ENCODE measurements at regions of chrX and their contacts with region 1.

Region 1: DNA sequence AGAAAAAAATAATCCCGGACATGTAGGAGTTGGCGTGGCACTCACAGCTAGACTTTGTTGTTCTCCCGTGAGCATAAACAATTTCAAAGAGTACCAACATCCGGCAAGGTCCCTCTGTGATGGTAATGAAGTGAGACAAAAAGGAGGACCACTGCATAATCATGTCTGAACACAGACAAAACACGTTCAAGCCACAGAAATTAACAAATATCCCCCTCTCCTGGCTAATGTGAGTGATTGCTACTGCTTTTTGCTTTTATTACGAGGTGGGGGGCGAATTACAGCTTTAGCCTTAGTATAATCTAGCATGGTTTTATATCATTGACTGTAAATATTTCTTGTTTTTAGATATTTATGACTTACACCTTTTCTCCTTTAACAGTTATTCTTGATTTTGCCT is 118.5 kb downstream of the PLS3 start:
- DNase-seq: peak; percentile 17 to 36
- ATAC-seq: peak; percentile 39 to 79; a peak in 3 of 6 replicates
- H3K4me3 ChIP-seq: peak overlapping the region; percentile 34; the same call in 1 of the 3 replicates
- H3K27ac ChIP-seq: no peak overlapping the region
- H3K4me1 ChIP-seq: no peaks in the 10 kb centered on the region
- CTCF ChIP-seq: peak; percentile 48
- EP300 ChIP-seq: no peak
- POLR2A ChIP-seq: no peak
- RAD21 ChIP-seq: peak; percentile 57 to 61

Region 2: GRCh38 chrX:115665122-115665521 is 14.3 kb before region 1 on chrX:
- CTCF ChIA-PET with region 1: interaction called, 11 read pairs
- POLR2A ChIA-PET with region 1: no interaction called
- DNase-seq: no peak
- ATAC-seq: no peak; a peak in 1 of 6 replicates
- H3K4me3 ChIP-seq: no peak overlapping the region
- H3K27ac ChIP-seq: no peak overlapping the region
- H3K4me1 ChIP-seq: no peaks in the 10 kb centered on the region
- CTCF ChIP-seq: no peak
- EP300 ChIP-seq: no peak
- POLR2A ChIP-seq: no peak
- RAD21 ChIP-seq: no peak

Region 3: DNA sequence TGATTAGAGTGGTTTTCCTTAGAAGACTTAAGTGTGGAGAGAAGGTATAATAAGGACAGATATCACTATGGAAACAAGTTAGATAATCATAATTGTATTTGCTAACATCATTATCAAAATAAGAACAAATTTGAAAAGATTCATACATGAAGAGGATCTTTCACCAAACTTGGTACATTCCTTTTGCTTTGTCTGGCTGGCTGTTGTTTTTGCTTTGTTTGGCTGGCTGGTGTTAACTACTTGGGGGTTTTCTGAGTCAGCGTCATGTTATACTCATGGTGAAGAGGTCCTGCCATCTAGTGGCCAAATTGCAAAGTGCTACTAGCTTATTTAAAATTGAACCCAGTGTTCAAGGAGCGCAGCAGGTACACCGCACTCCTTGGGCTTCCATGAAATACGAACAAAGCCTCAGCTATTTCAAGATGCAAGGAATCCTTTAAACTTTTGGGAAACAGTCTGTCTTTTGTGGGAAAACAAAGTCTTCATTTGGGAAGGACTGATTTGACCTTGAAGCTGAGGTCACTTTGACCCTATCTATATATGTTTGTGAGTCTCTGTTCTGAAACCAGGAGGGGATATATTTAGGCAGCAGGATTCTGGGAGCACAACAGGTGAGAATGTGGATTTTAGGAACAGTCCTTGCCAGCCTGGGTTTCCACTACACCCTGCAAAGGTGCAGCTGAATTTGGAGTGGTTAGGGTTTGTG is 11.2 kb after region 1 on chrX:
- CTCF ChIA-PET with region 1: interaction called, 15 read pairs
- POLR2A ChIA-PET with region 1: no interaction called
- DNase-seq: peak; percentile 49 to 69
- ATAC-seq: peak; percentile 77 to 90
- H3K4me3 ChIP-seq: no peak overlapping the region
- H3K27ac ChIP-seq: no peak overlapping the region
- H3K4me1 ChIP-seq: no peaks in the 10 kb centered on the region
- CTCF ChIP-seq: peak; percentile 64
- EP300 ChIP-seq: no peak
- POLR2A ChIP-seq: no peak
- RAD21 ChIP-seq: peak; percentile 69 to 71

Region 4: GRCh38 chrX:115709039-115709438 is 29.6 kb after region 1 on chrX:
- CTCF ChIA-PET with region 1: no interaction called
- POLR2A ChIA-PET with region 1: no interaction called
- DNase-seq: no peak
- ATAC-seq: no peak
- H3K4me3 ChIP-seq: no peak overlapping the region
- H3K27ac ChIP-seq: no peak overlapping the region
- H3K4me1 ChIP-seq: no peaks in the 10 kb centered on the region
- CTCF ChIP-seq: no peak
- EP300 ChIP-seq: no peak
- POLR2A ChIP-seq: no peak
- RAD21 ChIP-seq: no peak

Measured in A549 (cell line).